Common myeloid progenitor, CD34-positive (primary cell): ENCODE measurements at regions of chrX and their contacts with region 1.

Region 1: DNA sequence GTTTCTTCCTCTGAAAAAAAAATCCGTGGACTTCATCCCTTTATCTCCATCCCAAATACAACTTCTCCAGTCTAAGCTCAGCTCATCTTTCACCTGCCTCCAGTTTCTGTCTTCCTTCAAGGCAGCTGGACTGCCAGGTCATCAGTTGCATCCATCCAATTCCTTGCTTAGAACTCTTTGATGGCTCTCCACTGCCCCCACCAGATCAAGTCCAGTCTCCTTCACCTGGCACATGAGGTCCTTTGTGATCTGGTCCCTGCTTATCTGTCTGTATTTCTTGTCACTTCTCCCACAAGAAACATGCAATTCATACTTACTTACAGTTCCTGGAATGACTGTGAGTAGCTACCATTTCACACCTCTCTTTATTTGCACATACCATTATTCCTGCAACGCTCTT is 33.8 kb downstream of the OTUD6A start:
- DNase-seq: no peak
- H3K4me3 ChIP-seq: no peak overlapping the region
- H3K27ac ChIP-seq: no peak overlapping the region
- H3K4me1 ChIP-seq: no peaks in the 10 kb centered on the region
- H3K27me3 ChIP-seq: peaks cover 0 to 9% (median 0%) of the 10 kb centered on the region in 5 experiments

Region 2: GRCh38 chrX:69493193-69493592 is 602.9 kb before region 1 on chrX:
- CTCF ChIA-PET with region 1: interaction called, 23 read pairs
- POLR2A ChIA-PET with region 1: no interaction called
- DNase-seq: peak; percentile 17 to 58 (median 40)
- H3K4me3 ChIP-seq: no peak overlapping the region
- H3K27ac ChIP-seq: no peak overlapping the region
- H3K4me1 ChIP-seq: no peaks in the 10 kb centered on the region
- H3K27me3 ChIP-seq: peaks cover 0 to 32% (median 0%) of the 10 kb centered on the region in 5 experiments

Region 3: DNA sequence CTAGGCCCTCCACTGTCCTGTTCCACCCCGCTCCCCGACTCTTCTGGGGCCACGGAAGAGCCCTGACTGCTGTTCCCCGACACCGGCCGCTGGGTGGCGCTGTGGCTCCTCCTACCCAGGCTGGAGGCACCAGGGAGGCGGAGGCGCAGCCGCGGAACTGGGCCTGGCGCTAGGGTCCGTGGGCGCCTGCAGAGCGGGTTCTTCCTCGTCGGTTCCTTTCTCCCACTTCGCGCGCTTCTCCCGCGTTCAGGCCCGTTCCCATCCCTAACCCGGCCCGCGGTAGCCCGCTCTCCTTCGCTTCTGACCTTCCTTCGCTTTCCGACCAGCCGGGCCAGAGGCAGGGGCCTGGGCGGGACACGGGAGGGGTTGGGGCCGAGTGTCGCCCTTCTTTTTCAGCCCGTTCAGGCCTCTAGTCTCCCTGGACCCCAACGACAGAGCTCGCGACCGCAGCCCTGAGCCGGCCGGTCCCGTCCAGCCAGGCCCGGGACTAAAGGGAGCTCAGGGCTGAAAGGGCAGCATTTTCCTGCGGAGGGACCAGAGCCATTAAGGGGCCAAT is 557.7 kb before region 1 on chrX:
- CTCF ChIA-PET with region 1: interaction called, 10 read pairs
- POLR2A ChIA-PET with region 1: no interaction called
- DNase-seq: peak; percentile 67 to 79 (median 77)
- H3K4me3 ChIP-seq: peak overlapping the region in 5 of 7 experiments; percentile 26 to 68 (median 46)
- H3K27ac ChIP-seq: no peak overlapping the region
- H3K4me1 ChIP-seq: peaks cover 0 to 5% (median 2%) of the 10 kb centered on the region in 4 experiments
- H3K27me3 ChIP-seq: peaks cover 0 to 15% (median 0%) of the 10 kb centered on the region in 5 experiments

Region 4: GRCh38 chrX:70013466-70014381 is 82.3 kb before region 1 on chrX:
- CTCF ChIA-PET with region 1: no interaction called
- POLR2A ChIA-PET with region 1: no interaction called
- DNase-seq: no peak
- H3K4me3 ChIP-seq: no peak overlapping the region
- H3K27ac ChIP-seq: no peak overlapping the region
- H3K4me1 ChIP-seq: no peaks in the 10 kb centered on the region
- H3K27me3 ChIP-seq: peaks cover 0 to 7% (median 0%) of the 10 kb centered on the region in 5 experiments